ENCODE measurements at regions of chr7 and their contacts with region 1.

Region 1: DNA sequence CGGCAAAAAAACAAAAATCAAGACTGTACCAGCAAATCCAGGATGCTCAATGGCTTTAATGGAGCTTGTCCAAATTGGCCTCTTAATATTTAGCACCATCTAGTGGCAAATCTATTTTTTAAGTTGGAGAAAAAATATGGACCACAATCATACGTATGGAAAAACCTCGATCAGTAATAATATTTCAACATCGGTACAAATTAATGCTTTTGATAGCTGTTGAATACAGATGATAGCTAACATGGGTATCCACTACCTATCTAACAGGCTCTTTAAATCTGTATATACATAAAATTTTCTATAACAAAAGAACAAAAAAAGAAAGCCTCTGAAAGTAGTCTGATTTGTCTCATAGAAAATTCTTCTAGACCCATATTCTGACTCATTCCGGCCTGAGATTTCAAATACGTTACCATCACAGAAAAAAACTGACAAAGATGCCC is 29.2 kb downstream of the COA1 start:
- DNase-seq: no peak
- ATAC-seq: peak; percentile 84
- H3K4me3 Mint-ChIP-seq: peak overlapping the region; percentile 21
- H3K27ac Mint-ChIP-seq: peak overlapping the region; percentile 68
- H3K4me1 Mint-ChIP-seq: peaks cover 30% of the 10 kb centered on the region
- H3K27me3 Mint-ChIP-seq: no peaks in the 10 kb centered on the region
- CTCF ChIP-seq: peak; percentile 41

Region 2: GRCh38 chr7:43590862-43591550 is 109.1 kb before region 1 on chr7:
- CTCF ChIA-PET with region 1: interaction called, 648 read pairs
- POLR2A ChIA-PET with region 1: interaction called, 295 read pairs
- intact Hi-C with region 1: no loop called
- DNase-seq: no peak
- ATAC-seq: peak; percentile 72
- H3K4me3 Mint-ChIP-seq: peak overlapping the region; percentile 50
- H3K27ac Mint-ChIP-seq: peak overlapping the region; percentile 81
- H3K4me1 Mint-ChIP-seq: peaks cover 89% of the 10 kb centered on the region
- H3K27me3 Mint-ChIP-seq: no peaks in the 10 kb centered on the region
- CTCF ChIP-seq: no peak

Region 3: DNA sequence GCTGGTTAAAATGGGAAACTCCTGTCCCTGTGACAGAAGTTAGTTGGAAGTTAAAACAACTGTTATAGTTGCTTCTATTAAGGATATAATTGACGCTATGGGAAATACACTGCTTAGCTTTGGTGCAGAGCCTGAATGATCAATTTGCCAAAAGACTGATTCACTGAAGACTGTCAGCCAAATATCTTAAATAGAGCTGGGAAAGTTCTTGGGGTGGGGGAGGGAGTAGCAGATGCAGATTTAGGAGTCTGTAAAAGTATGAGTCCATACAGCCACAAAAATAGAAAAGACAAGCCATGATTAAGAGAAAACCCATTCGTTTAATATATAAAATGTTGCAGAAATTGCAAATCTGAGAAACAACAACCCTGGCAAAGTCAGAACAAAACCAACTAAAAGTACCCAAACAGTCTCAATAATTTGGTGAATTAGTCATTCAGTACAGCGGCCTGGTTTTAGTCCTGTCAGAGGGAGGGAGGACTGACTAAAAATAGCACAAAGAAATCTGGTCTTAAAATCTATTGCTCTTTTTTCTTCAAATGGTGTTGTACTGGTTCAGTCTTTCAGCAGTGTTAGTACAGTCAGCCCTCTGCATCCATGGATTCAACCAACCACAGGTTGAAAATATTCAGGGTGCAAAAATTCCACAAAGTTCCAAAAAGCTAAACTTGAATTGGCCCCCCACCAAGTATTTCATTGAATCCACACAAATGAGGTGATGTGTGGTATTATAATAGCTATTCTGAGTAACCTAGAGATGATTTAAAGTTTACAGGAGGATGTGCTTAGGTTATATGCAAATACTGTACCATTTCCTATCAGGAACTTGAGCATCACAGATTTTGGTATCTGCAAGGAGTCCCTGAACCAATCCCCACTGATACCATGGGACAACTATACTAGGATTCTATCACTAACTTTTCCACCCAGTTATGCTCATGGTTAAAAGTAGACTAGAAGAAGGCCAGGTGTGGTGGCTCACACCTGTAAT is 87.2 kb before region 1 on chr7:
- CTCF ChIA-PET with region 1: interaction called, 16 read pairs
- POLR2A ChIA-PET with region 1: interaction called, 6 read pairs
- intact Hi-C with region 1: no loop called
- DNase-seq: no peak
- ATAC-seq: peak; percentile 58
- H3K4me3 Mint-ChIP-seq: peak overlapping the region; percentile 49
- H3K27ac Mint-ChIP-seq: peak overlapping the region; percentile 86
- H3K4me1 Mint-ChIP-seq: peaks cover 60% of the 10 kb centered on the region
- H3K27me3 Mint-ChIP-seq: no peaks in the 10 kb centered on the region
- CTCF ChIP-seq: no peak

Region 4: DNA sequence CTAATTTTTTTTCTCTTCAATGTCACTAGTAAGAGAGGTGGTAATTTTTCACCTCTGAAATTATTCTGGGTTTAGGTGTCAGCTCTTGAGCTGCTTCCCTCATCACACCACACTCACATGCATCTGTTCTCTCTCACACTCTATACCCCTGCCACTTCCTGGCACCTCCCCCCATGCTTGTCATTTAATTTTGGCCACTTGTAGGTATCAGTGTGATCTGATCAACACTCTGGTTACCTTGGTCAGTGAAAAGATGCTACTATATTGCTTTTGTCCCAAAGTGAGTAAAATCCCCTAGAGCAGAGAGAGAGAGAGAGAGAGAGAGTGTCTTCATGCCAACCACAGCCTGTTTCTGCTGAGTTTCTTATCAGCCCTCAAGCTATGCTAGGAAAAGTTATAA is 74.6 kb before region 1 on chr7:
- CTCF ChIA-PET with region 1: interaction called, 13 read pairs
- POLR2A ChIA-PET with region 1: interaction called, 6 read pairs
- intact Hi-C with region 1: loop called (anchors 2 kb)
- DNase-seq: no peak
- ATAC-seq: peak; percentile 76
- H3K4me3 Mint-ChIP-seq: peak overlapping the region; percentile 51
- H3K27ac Mint-ChIP-seq: peak overlapping the region; percentile 85
- H3K4me1 Mint-ChIP-seq: peaks cover 84% of the 10 kb centered on the region
- H3K27me3 Mint-ChIP-seq: no peaks in the 10 kb centered on the region
- CTCF ChIP-seq: no peak

Region 5: DNA sequence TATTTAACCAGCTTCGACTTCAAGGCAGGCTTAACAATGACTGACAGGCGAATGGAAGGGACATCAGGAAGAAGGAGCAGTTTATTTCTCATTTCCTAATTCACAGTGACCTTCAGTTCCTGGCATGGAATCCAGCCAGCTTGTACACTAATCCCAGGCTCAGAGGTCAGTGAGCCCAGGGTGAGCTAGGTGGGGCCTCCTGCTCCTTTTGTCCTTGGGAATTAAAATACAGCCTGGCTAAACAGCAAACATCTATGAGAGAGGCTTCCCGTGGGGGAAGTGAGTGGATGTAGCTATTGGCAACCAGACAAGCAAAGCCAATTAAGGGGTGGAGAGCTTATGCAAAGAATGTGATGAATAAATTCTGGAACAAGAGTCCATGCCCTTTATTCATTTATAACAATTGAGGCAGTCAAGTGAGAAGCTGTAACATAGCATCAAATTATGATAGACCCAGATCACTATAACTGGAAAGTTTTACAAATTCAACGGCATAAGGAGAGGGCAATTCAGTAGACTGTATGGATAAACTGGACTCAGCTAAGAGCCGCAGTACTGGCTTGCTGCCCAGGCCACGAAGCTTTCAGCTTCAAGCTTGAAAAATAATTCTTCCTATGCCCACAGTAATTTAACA is 60.1 kb before region 1 on chr7:
- CTCF ChIA-PET with region 1: interaction called, 13 read pairs
- POLR2A ChIA-PET with region 1: interaction called, 5 read pairs
- intact Hi-C with region 1: no loop called
- DNase-seq: no peak
- ATAC-seq: no peak
- H3K4me3 Mint-ChIP-seq: no peak overlapping the region
- H3K27ac Mint-ChIP-seq: peak overlapping the region; percentile 65
- H3K4me1 Mint-ChIP-seq: peaks cover 76% of the 10 kb centered on the region
- H3K27me3 Mint-ChIP-seq: no peaks in the 10 kb centered on the region
- CTCF ChIP-seq: no peak

Region 6: DNA sequence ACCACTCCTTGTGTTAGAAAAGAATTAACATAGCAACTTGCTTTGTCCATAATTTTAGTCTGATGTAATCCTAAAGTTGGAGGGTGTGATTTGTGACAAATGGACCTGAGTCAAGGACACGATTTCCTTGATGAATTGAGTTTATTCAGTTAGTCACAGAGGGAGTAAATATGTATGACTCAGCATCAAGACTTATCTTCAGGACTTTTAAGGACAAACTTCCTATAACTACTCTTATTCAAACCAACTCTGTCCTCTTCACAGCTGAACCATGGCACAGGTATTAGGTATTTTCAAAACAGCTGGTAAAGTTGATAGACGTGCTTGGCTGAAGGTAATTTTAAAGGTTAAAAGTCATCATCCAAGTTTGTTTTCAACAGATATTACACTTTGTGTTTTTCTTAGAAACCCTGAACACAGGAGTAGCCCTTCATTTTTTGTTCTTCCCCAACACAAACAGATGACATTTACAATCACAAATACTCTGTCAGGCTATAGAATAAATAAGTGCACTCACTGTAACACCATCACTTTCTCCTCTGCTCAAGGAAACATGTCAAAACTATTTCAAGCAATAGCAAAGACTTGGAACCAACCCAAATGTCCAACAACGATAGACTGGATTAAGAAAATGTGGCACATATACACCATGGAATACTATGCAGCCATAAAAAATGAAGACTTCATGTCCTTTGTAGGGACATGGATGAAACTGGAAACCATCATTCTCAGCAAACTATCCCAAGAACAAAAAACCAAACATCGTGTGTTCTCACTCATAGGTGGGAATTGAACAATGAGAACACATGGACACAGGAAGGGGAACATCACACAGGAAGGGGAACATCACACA is 25.3 kb before region 1 on chr7:
- CTCF ChIA-PET with region 1: interaction called, 5 read pairs
- POLR2A ChIA-PET with region 1: no interaction called
- intact Hi-C with region 1: loop called (anchors 2 kb)
- DNase-seq: no peak
- ATAC-seq: no peak
- H3K4me3 Mint-ChIP-seq: no peak overlapping the region
- H3K27ac Mint-ChIP-seq: peak overlapping the region; percentile 30
- H3K4me1 Mint-ChIP-seq: peaks cover 72% of the 10 kb centered on the region
- H3K27me3 Mint-ChIP-seq: no peaks in the 10 kb centered on the region
- CTCF ChIP-seq: no peak

Region 7: DNA sequence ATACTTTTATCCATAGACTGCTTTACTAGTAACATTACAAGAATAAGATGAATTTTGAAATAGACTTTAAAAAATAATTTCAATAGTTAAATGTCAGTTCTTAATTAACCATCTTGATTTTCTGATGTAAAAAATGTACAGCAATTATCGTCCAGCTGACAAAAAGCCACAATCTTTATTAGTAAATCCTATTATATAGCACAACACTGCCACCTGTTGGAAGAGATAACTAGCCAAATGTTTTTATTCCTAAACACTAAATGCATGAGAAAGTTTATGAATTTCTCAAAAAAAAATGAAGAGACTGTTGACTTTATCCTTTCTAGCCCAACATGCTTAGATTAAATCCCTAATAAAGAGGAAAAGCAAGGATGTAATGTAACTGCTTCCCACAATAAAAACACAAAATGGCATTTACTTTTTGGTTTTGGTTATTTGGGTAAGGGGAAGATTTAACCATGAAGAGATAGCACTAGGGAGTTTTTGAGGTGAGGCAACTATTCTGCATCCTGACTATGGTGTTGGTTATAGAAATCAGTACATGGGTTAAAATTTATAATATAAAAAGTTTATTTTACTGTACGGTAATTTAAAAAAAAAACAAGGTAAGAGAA is 21.2 kb after region 1 on chr7:
- CTCF ChIA-PET with region 1: interaction called, 29 read pairs
- POLR2A ChIA-PET with region 1: interaction called, 4 read pairs
- intact Hi-C with region 1: loop called (anchors 1 kb)
- DNase-seq: no peak
- ATAC-seq: peak; percentile 25
- H3K4me3 Mint-ChIP-seq: no peak overlapping the region
- H3K27ac Mint-ChIP-seq: no peak overlapping the region
- H3K4me1 Mint-ChIP-seq: peaks cover 16% of the 10 kb centered on the region
- H3K27me3 Mint-ChIP-seq: no peaks in the 10 kb centered on the region
- CTCF ChIP-seq: peak; percentile 61

Measured in activated B cell treated with CpG ODN at 0.5 μM for 24 hours (primary cell).